Thyroid gland (tissue), 4 donors: ENCODE measurements at regions of chr14 and their contacts with region 1.

Region 1: GRCh38 chr14:50773632-50774541 is 57.1 kb downstream of the NIN start:
- DNase-seq: peak; percentile 48 to 59
- H3K4me3 ChIP-seq: no peak overlapping the region
- H3K27ac ChIP-seq: no peak overlapping the region
- H3K4me1 ChIP-seq: no peaks in the 10 kb centered on the region
- H3K27me3 ChIP-seq: no peaks in the 10 kb centered on the region
- CTCF ChIP-seq: peak in 4 of 6 experiments; percentile 64 to 88 (median 82)
- POLR2A ChIP-seq: no peak

Region 2: DNA sequence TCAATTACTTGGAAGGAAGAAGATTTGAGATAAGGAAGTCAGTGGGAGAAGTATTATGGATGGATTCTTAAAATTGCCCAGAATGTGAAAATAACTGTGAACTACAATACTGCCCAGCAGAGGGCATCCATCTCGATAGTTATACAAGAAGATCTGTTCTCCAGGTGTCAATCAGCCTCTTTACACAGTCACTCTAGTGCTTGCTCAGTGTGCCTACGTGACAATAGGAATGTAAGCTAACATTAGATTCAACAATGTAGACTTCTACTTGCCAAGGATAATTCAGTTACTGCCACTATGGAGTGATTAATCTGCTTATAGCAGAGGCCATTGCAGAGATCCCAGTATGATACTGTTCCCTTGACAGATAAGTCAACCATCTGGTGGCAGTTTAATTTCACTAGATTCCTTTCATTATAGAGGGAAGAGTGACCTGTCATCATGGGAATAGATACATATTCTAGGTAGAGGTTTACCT is 230.9 kb before region 1 on chr14:
- intact Hi-C with region 1: loop called (anchors 5 kb)
- DNase-seq: peak; percentile 13 to 37
- H3K4me3 ChIP-seq: no peak overlapping the region
- H3K27ac ChIP-seq: no peak overlapping the region
- H3K4me1 ChIP-seq: no peaks in the 10 kb centered on the region
- H3K27me3 ChIP-seq: no peaks in the 10 kb centered on the region
- CTCF ChIP-seq: peak; percentile 42 to 64 (median 56)
- POLR2A ChIP-seq: no peak

Region 3: DNA sequence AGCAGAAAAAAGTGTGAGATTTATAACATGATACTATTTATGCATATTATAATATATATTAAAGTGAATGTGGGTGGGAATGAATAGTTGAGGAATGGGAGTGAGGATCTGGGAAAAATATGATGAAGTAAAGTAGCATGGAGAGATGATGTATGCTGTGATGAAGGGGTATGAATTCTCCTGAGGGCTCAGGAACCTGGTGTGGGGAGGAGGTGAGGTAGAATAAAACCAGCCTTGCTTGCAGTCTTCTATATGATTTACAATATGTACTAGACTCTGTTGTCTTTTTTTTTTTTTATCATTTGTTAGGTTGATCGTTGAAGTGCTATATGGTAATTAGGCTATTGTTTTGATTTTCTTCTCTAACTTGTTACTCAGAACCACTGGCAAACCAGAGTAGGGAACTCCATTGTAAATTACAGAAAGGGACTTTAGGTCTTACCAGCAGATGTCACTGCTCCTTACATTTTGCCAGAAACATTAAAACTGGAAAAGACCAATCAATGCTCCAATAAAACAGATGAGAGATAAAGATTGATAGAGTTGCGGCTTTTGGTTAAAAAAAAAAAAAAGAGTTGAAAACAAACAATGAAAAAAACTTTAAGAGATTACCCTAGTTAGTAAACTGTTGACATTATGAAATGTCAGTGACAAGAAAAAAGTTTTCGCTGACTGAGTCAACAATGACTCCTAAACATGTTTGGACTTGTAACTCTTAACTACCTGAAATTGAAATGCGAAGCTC is 174.0 kb before region 1 on chr14:
- intact Hi-C with region 1: loop called (anchors 5 kb)
- DNase-seq: no peak
- H3K4me3 ChIP-seq: no peak overlapping the region
- H3K27ac ChIP-seq: no peak overlapping the region
- H3K4me1 ChIP-seq: peaks cover 0 to 4% of the 10 kb centered on the region in 2 donors
- H3K27me3 ChIP-seq: no peaks in the 10 kb centered on the region
- CTCF ChIP-seq: peak in 4 of 6 experiments; percentile 43 to 83 (median 64)
- POLR2A ChIP-seq: no peak

Region 4: DNA sequence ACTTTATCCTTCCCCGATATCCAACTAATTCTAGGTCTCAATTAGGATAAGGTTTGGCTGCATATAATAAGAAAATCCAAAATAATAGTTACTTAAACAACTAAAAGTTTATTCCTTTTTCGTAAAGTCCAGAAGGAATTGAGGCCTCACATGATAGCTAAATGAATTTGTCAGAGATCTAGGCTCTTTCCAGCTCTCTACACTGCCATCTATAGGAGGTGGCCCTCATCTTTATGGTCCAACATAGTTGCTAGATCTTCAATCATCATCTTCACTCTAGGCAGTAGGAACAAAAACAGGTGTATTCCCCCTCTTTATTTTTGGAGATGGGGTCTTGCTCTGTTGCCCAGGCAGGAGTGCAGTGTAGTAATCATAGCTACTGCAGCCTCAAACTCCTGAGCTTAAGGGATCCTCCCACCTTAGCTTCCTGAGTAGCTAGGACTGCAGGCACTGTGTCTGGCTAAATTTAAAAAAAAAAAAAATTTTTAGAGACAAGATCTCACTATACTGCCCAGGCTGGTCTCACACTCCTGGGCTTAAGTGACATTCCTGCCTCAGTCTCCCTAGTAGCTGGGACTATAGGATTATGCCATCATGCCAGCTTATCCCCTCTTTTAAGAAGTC is 59.3 kb before region 1 on chr14:
- intact Hi-C with region 1: loop called (anchors 10 kb)
- DNase-seq: peak in 1 of 2 donors; percentile 21
- H3K4me3 ChIP-seq: no peak overlapping the region
- H3K27ac ChIP-seq: no peak overlapping the region
- H3K4me1 ChIP-seq: no peaks in the 10 kb centered on the region
- H3K27me3 ChIP-seq: no peaks in the 10 kb centered on the region
- CTCF ChIP-seq: peak in 5 of 6 experiments; percentile 46 to 54 (median 52)
- POLR2A ChIP-seq: no peak

Region 5: DNA sequence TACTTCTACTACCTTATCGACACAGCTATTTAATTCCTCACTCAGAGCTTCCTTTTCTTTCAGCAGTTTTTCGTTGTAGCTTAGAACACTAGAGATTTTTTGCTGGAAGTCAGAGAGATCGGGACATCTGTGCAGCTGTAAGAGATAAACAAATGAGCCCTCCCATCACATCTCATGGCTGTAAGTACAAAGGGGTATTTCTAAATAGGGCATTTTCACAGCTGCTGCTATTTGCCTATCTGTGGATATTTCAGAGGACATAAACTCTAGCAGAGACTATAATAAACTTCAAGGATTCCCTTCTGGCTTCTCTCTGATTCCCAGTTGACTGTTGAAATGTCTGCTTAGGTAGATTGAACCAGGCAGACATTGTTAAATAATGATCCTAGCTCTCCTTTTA is 29.7 kb before region 1 on chr14:
- intact Hi-C with region 1: no loop called
- DNase-seq: no peak
- H3K4me3 ChIP-seq: no peak overlapping the region
- H3K27ac ChIP-seq: no peak overlapping the region
- H3K4me1 ChIP-seq: no peaks in the 10 kb centered on the region
- H3K27me3 ChIP-seq: no peaks in the 10 kb centered on the region
- CTCF ChIP-seq: no peak
- POLR2A ChIP-seq: no peak